Cardiac septum (tissue), 1 donor: ENCODE measurements at regions of chr12 and their contacts with region 1.

Region 1: GRCh38 chr12:26434299-26435068 is 239.1 kb downstream of the SSPN start:
- DNase-seq: no peak

Region 2: DNA sequence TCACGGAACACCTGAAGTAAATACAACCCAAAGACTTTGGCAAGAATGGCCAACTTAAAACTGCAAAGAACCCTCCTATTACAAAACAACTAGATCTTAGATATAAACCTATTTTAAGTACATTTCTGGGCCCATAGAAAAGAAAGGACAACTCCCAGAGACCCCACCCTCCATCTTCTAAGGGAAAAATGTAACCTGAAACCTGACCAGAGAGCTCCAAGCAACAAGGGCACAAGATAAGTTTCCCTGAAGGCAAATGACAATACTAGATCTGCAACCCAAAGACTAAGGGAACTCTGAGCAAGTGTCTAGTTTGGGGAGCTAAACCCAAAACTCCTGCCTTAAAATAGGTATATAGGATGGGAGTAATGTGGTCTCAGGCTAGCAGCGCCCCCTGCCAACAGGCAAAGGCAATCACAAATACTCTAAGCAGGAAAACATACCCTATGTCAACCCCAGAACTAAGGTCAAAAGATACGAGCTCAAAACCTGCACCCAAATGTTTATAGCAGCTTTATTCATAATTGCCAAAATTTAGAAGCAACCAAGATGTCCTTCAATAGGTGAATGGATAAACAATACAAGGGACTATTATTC is 179.6 kb after region 1 on chr12:
- intact Hi-C with region 1: loop called (anchors 10 kb)
- DNase-seq: no peak

Region 3: GRCh38 chr12:26651566-26652188 is 217.2 kb after region 1 on chr12:
- intact Hi-C with region 1: loop called (anchors 5 kb)
- DNase-seq: no peak